Panc1 (cell line): ENCODE measurements at regions of chr2 and their contacts with region 1.

Region 1: GRCh38 chr2:73163483-73164367 is 38.6 kb upstream of the NOTO start:
- DNase-seq: peak; percentile 61
- ATAC-seq: peak; percentile 96
- H3K4me3 ChIP-seq: no peak overlapping the region
- H3K27ac ChIP-seq: no peak overlapping the region
- H3K4me1 ChIP-seq: no peaks in the 10 kb centered on the region
- H3K27me3 ChIP-seq: no peaks in the 10 kb centered on the region
- CTCF ChIP-seq: peak; percentile 95

Region 2: DNA sequence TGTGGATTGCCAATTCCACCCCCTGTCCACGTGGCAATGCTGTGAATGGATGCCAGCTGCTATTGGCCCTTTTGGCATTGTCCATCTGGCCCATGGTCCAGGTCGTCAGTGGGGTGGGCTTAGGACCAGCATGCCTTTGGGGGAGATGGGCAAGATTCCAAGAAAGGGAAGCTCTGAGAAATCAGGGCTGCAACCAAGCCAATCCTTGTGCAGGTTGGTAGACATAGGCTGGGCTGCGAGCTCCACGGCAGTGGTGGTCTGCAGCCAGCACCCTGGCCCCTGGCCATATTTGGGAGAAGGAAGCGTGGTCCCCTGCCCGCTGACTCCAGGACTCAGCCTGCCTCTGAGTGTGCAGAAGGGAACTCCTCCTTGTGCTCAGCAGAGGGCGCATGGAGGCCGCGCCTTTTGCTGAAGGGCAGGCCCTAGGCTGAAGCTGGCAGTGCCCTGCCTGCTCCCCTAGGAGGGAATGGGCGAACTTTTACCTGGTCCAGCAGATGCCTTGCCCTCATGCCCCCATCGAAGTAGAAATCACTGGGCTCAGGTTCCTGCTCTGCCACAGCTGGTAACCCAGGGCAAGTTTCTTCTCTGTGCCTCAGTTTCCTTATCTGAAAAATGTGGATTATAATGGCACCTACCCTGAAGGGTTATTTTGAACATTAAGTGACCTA is 271.1 kb before region 1 on chr2:
- CTCF ChIA-PET with region 1: interaction called, 6 read pairs
- POLR2A ChIA-PET with region 1: no interaction called
- in situ Hi-C with region 1: no loop called
- intact Hi-C with region 1: loop called (anchors 5 kb)
- DNase-seq: no peak
- ATAC-seq: peak; percentile 90
- H3K4me3 ChIP-seq: no peak overlapping the region
- H3K27ac ChIP-seq: no peak overlapping the region
- H3K4me1 ChIP-seq: peaks cover 12% of the 10 kb centered on the region
- H3K27me3 ChIP-seq: no peaks in the 10 kb centered on the region
- CTCF ChIP-seq: peak; percentile 91

Region 3: DNA sequence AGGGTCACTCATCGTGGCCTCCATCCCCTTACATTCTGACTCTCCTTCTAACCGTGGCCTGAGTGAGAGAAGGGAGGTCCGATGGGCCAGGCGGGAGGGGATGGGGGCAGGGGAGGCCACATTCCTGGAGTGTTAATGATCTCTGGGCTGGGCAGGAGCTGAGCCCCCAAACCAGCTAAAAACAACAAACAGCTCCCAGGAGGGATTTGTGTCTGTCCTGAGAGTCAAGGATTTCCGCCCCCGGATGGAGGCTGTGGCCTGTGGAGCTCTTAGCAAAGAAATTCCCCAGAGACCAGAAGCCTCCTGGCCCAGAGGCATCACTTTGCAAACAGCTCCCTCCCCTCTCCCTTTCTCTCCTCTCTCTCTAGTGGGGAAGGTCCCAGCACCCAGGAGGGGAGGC is 222.9 kb before region 1 on chr2:
- CTCF ChIA-PET with region 1: interaction called, 11 read pairs
- POLR2A ChIA-PET with region 1: no interaction called
- in situ Hi-C with region 1: no loop called
- intact Hi-C with region 1: no loop called
- DNase-seq: no peak
- ATAC-seq: no peak
- H3K4me3 ChIP-seq: no peak overlapping the region
- H3K27ac ChIP-seq: no peak overlapping the region
- H3K4me1 ChIP-seq: no peaks in the 10 kb centered on the region
- H3K27me3 ChIP-seq: no peaks in the 10 kb centered on the region
- CTCF ChIP-seq: no peak

Region 4: DNA sequence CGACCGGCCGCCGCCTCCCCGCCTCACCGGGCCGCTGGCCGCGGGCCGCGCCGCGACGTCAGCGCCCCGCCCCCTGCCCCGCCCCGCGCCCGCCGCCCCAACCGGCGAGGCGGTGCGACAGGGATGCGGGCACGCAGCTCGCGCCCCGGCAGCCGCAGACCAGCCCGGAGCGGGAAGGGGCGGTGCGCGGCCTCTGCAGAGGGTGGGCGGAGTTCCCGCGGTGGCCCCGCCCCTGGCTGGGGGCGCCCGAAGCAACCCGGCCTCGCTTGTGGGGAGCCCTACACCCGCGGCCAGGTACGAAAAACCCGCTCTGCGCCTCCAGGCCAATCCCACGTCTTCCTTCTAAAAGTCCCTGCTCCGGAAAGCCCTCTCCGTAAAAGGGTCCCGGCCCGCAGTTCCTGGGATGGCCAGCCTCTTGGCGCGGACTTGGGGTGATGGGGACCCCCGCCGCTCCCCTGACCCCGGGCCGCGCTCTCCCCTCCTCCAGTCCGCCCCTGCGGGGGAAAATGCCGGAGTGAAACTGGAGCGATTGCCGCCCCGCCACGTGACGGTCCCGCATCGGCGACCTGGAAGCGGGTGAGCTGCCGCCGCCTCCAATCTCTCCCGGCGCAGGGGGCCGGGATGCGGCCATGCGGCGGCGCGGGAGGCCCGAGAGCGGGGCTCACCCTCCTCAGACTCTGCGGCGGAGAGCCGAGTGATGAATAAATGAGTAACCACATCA is 50.7 kb before region 1 on chr2 and contains the start of gene RAB11FIP5:
- CTCF ChIA-PET with region 1: interaction called, 10 read pairs
- POLR2A ChIA-PET with region 1: no interaction called
- in situ Hi-C with region 1: no loop called
- intact Hi-C with region 1: no loop called
- DNase-seq: no peak
- ATAC-seq: peak; percentile 93
- H3K4me3 ChIP-seq: peak within 1 kb of the TSS; percentile 71 to 80
- H3K27ac ChIP-seq: peak within 1 kb of the TSS; percentile 83
- H3K4me1 ChIP-seq: peaks cover 16% of the 10 kb centered on the region
- H3K27me3 ChIP-seq: no peaks in the 10 kb centered on the region
- CTCF ChIP-seq: no peak
- total RNA-seq, gene RAB11FIP5: 27.3 TPM

Region 5: DNA sequence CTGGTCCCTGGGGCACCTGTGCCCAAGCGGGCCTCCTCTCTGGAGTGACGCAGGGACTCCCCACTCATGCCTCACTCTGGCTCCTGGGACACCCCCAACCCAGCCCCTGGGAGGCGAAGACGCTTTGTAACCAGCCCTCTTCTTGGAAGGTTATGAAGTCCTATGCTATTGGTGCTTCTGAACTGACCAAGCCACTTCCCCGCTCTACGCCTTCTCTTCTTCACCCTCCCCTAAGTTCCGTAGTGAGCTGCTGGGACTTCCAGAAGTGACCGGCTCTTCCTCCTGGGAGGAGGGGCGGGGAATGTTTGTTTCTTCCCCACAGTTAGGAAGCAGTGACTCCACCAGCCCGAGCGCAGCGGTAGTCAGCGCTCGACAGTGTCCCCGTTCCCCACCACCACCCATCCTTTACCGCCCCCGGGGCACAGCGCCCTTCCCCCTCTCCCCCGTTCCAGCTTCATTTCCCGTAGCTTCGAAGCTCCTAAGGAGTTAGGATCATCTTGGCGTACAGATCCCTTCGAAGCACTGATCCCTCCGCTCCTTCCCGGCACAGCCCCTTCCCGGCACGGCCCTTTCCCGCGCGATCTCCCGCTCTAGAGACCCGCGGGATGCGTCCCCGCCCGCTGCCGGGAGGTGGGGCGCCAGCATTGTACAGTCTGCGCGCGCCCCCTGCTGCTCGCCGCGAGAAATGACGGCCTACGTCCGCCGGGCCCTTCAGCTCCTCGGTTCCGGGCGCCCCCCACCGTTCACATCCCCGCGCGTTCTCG is 13.3 kb after region 1 on chr2:
- CTCF ChIA-PET with region 1: interaction called, 30 read pairs
- POLR2A ChIA-PET with region 1: no interaction called
- in situ Hi-C with region 1: no loop called
- intact Hi-C with region 1: no loop called
- DNase-seq: peak; percentile 33
- ATAC-seq: peak; percentile 92
- H3K4me3 ChIP-seq: peak overlapping the region; percentile 61 to 84
- H3K27ac ChIP-seq: peak overlapping the region; percentile 70
- H3K4me1 ChIP-seq: peaks cover 11% of the 10 kb centered on the region
- H3K27me3 ChIP-seq: peaks cover 14% of the 10 kb centered on the region
- CTCF ChIP-seq: peak; percentile 99